ENCODE measurements at regions of chr4 and their contacts with region 1.

Region 1: GRCh38 chr4:15738877-15739276 is 36.0 kb downstream of the BST1 start:
- DNase-seq: no peak
- H3K4me3 Mint-ChIP-seq: peak overlapping the region; percentile 35
- H3K27ac Mint-ChIP-seq: peak overlapping the region; percentile 85
- H3K4me1 Mint-ChIP-seq: peaks cover 51% of the 10 kb centered on the region
- H3K27me3 Mint-ChIP-seq: no peaks in the 10 kb centered on the region

Region 2: GRCh38 chr4:15601862-15602261 is 137.0 kb before region 1 on chr4:
- intact Hi-C with region 1: no loop called
- DNase-seq: no peak
- H3K4me3 Mint-ChIP-seq: no peak overlapping the region
- H3K27ac Mint-ChIP-seq: no peak overlapping the region
- H3K4me1 Mint-ChIP-seq: no peaks in the 10 kb centered on the region
- H3K27me3 Mint-ChIP-seq: no peaks in the 10 kb centered on the region

Region 3: DNA sequence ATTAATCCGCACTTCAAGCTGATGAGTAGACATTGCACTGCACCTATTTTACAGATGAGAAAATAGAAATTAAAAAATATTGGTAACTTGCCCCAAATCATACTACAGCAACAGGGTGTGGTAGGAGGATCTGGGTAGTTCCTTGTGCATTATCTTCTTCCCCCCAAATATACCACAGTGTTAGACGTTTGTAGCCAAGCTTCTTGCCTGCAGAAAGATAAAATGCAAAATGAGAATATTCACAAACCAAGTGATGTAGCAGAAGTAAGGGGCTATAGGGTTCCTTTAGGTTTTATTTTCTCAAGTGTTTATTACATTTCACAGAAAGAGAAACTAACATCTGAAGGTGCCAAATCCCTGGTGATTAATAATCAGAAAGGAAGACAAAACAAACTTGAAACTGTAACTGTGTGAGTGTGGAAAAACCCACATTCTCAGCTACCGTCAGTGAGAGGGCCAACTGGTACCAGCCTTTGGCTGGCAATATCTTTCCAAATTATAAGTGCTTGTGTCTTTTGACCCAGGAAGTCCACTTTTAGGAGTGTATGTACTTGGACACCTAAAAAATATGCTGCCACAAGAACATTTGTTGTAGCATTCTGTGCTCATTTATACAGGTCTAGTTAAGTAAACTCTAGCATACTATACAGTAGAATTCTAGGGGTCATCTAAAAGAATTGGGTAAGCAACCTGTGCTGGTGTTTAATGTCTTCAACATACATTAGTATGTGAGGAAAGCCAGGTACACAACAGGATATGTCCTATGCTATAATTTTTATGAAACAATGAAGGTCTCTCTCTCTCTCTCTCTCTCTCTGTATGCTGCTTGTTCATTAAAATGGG is 32.6 kb after region 1 on chr4:
- intact Hi-C with region 1: loop called (anchors 1 kb)
- DNase-seq: peak; percentile 37
- H3K4me3 Mint-ChIP-seq: peak overlapping the region; percentile 66
- H3K27ac Mint-ChIP-seq: peak overlapping the region; percentile 86
- H3K4me1 Mint-ChIP-seq: peaks cover 85% of the 10 kb centered on the region
- H3K27me3 Mint-ChIP-seq: no peaks in the 10 kb centered on the region